ENCODE measurements at regions of chr3 and their contacts with region 1.

Region 1: GRCh38 chr3:44557074-44557473 is 2.1 kb downstream of the ZKSCAN7 start:
- DNase-seq: no peak
- ATAC-seq: no peak
- H3K4me3 ChIP-seq: no peak overlapping the region
- H3K4me3 Mint-ChIP-seq: no peak overlapping the region
- H3K27ac ChIP-seq: no peak overlapping the region
- H3K27ac Mint-ChIP-seq: no peak overlapping the region
- H3K4me1 ChIP-seq: peaks cover 3 to 14% of the 10 kb centered on the region in 2 experiments
- H3K4me1 Mint-ChIP-seq: peaks cover 23 to 27% (median 24%) of the 10 kb centered on the region in 3 donors
- H3K27me3 ChIP-seq: no peaks in the 10 kb centered on the region
- H3K27me3 Mint-ChIP-seq: no peaks in the 10 kb centered on the region

Region 2: DNA sequence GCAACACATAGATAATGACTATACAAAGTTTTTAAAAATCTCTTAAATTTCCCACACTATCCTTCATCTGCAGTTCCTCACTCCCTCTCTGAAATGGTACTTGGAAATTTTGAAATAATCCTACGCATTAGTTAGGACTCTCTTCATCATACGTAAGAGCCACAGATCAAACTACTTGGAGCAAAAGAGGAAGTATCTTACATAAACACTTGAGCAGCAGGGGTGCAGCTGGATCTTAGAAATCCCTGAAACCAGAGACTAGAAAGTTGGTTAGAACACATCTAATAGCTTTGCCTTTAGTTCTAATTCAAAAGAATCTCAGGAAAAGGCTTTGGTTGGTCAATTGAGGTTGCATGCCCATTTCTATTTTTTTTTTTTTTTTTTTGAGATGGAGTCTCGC is 40.8 kb before region 1 on chr3:
- CTCF ChIA-PET with region 1: interaction called, 6 to 8 read pairs
- POLR2A ChIA-PET with region 1: interaction called, 3 to 10 read pairs
- DNase-seq: no peak
- ATAC-seq: no peak
- H3K4me3 ChIP-seq: no peak overlapping the region
- H3K4me3 Mint-ChIP-seq: no peak overlapping the region
- H3K27ac ChIP-seq: no peak overlapping the region
- H3K27ac Mint-ChIP-seq: no peak overlapping the region
- H3K4me1 ChIP-seq: peaks cover 2 to 6% of the 10 kb centered on the region in 2 experiments
- H3K4me1 Mint-ChIP-seq: peaks cover 11 to 19% (median 15%) of the 10 kb centered on the region in 3 donors
- H3K27me3 ChIP-seq: peaks cover 0 to 6% of the 10 kb centered on the region in 2 experiments
- H3K27me3 Mint-ChIP-seq: peaks cover 16 to 17% of the 10 kb centered on the region in 2 donors

Region 3: GRCh38 chr3:44529927-44530326 is 27.1 kb before region 1 on chr3:
- CTCF ChIA-PET with region 1: no interaction called
- POLR2A ChIA-PET with region 1: no interaction called
- DNase-seq: peak in 1 of 35 experiments; percentile 27
- ATAC-seq: no peak
- H3K4me3 ChIP-seq: no peak overlapping the region
- H3K4me3 Mint-ChIP-seq: no peak overlapping the region
- H3K27ac ChIP-seq: no peak overlapping the region
- H3K27ac Mint-ChIP-seq: no peak overlapping the region
- H3K4me1 ChIP-seq: no peaks in the 10 kb centered on the region
- H3K4me1 Mint-ChIP-seq: peaks cover 0 to 2% (median 0%) of the 10 kb centered on the region in 3 donors
- H3K27me3 ChIP-seq: peaks cover 0 to 26% of the 10 kb centered on the region in 2 experiments
- H3K27me3 Mint-ChIP-seq: peaks cover 10 to 29% of the 10 kb centered on the region in 2 donors

Measured in T-cell (primary cell).